PC-3 (cell line): ENCODE measurements at regions of chr3 and their contacts with region 1.

Region 1: GRCh38 chr3:59212128-59212779 is 162.4 kb upstream of the CFAP20DC start:
- DNase-seq: peak; percentile 86
- ATAC-seq: peak; percentile 94
- H3K4me3 ChIP-seq: no peak overlapping the region
- H3K27ac ChIP-seq: peak overlapping the region; percentile 17
- H3K4me1 ChIP-seq: peaks cover 8% of the 10 kb centered on the region
- H3K27me3 ChIP-seq: no peaks in the 10 kb centered on the region
- CTCF ChIP-seq: peak; percentile 90

Region 2: DNA sequence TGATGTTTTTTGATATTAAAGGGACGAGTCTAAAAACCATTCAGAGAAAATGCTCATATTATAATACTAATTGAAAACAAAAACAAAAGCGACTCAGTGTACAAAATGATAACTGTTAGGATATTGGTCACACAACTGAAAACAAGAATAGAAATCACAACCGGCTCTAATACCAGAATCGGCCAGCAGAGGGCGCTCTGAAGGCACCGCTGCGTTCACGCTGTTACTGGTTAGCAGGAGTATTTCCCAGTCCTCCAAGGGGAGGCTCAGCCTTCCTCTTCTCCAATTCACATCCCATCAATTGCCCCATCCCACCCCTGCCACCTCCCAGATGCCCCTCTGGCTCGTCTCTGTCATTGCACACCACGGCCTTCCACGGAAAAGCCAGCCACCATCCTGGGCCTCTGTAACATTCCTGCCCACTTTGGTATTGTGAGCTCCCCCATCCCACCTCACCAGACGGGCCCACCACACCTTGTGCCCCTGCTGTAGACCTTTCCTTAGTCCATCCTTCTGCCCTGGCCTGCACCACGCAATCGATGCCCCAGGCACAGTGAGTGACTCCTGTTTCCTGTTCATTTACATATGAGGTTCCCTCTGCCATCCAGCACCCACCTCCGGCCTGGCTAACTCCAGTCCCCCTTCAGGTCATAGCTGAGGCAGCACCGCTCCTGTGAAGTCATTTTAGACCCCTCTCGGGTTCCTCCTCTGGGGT is 643.5 kb before region 1 on chr3:
- CTCF ChIA-PET with region 1: no interaction called
- POLR2A ChIA-PET with region 1: no interaction called
- intact Hi-C with region 1: loop called (anchors 10 kb)
- DNase-seq: peak; percentile 92
- ATAC-seq: peak; percentile 9
- H3K4me3 ChIP-seq: no peak overlapping the region
- H3K27ac ChIP-seq: no peak overlapping the region
- H3K4me1 ChIP-seq: peaks cover 31% of the 10 kb centered on the region
- H3K27me3 ChIP-seq: no peaks in the 10 kb centered on the region
- CTCF ChIP-seq: peak; percentile 93

Region 3: GRCh38 chr3:58824285-58824684 is 388.0 kb before region 1 on chr3:
- CTCF ChIA-PET with region 1: no interaction called
- POLR2A ChIA-PET with region 1: no interaction called
- intact Hi-C with region 1: loop called (anchors 2 kb)
- DNase-seq: peak; percentile 81
- ATAC-seq: peak; percentile 81
- H3K4me3 ChIP-seq: no peak overlapping the region
- H3K27ac ChIP-seq: no peak overlapping the region
- H3K4me1 ChIP-seq: no peaks in the 10 kb centered on the region
- H3K27me3 ChIP-seq: no peaks in the 10 kb centered on the region
- CTCF ChIP-seq: peak; percentile 97

Region 4: GRCh38 chr3:59245859-59246501 is 33.7 kb after region 1 on chr3:
- CTCF ChIA-PET with region 1: no interaction called
- POLR2A ChIA-PET with region 1: no interaction called
- intact Hi-C with region 1: loop called (anchors 2 kb)
- DNase-seq: peak; percentile 82
- ATAC-seq: peak; percentile 11
- H3K4me3 ChIP-seq: peak overlapping the region; percentile 32
- H3K27ac ChIP-seq: peak overlapping the region; percentile 95
- H3K4me1 ChIP-seq: peaks cover 57% of the 10 kb centered on the region
- H3K27me3 ChIP-seq: no peaks in the 10 kb centered on the region
- CTCF ChIP-seq: no peak

Region 5: DNA sequence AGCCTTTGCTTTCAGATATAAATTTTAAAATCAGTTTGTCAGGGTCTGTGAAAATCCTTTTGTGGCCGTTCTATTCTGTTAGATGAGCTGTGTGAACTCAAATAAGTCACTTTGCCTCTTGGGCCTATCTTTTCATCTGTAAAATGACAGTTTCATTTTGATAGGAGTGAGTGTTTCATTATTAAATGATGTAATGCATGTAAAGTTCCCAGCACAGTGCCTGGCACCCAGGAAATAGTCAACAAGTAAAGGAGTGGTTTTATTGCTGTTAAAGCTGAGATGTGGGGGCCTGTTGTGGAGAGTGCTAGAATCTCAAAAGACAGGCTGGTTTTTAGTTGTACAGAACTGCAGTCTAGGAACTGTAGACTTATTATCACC is 232.0 kb after region 1 on chr3:
- CTCF ChIA-PET with region 1: no interaction called
- POLR2A ChIA-PET with region 1: no interaction called
- intact Hi-C with region 1: loop called (anchors 1 kb)
- DNase-seq: no peak
- ATAC-seq: no peak
- H3K4me3 ChIP-seq: no peak overlapping the region
- H3K27ac ChIP-seq: no peak overlapping the region
- H3K4me1 ChIP-seq: peaks cover 15% of the 10 kb centered on the region
- H3K27me3 ChIP-seq: no peaks in the 10 kb centered on the region
- CTCF ChIP-seq: no peak

Region 6: GRCh38 chr3:59660852-59661625 is 448.8 kb after region 1 on chr3:
- CTCF ChIA-PET with region 1: no interaction called
- POLR2A ChIA-PET with region 1: no interaction called
- intact Hi-C with region 1: loop called (anchors 1 kb)
- DNase-seq: peak; percentile 62
- ATAC-seq: peak; percentile 41
- H3K4me3 ChIP-seq: peak overlapping the region; percentile 8; the same call in 1 of the 2 replicates
- H3K27ac ChIP-seq: peak overlapping the region; percentile 48
- H3K4me1 ChIP-seq: peaks cover 49% of the 10 kb centered on the region
- H3K27me3 ChIP-seq: no peaks in the 10 kb centered on the region
- CTCF ChIP-seq: no peak

Region 7: GRCh38 chr3:59857589-59858346 is 645.5 kb after region 1 on chr3:
- CTCF ChIA-PET with region 1: no interaction called
- POLR2A ChIA-PET with region 1: no interaction called
- intact Hi-C with region 1: loop called (anchors 1 kb)
- DNase-seq: peak; percentile 86
- ATAC-seq: peak; percentile 99
- H3K4me3 ChIP-seq: no peak overlapping the region
- H3K27ac ChIP-seq: no peak overlapping the region
- H3K4me1 ChIP-seq: peaks cover 10% of the 10 kb centered on the region; the same call in 1 of the 2 replicates
- H3K27me3 ChIP-seq: no peaks in the 10 kb centered on the region
- CTCF ChIP-seq: peak; percentile 96